Activated CD8-positive, alpha-beta T cell treated with anti-CD3 and anti-CD28 coated beads, Interleukin-2, amount 10 ng/mL, durations not matched to agents 7 days and 5 days (primary cell): ENCODE measurements at regions of chr14 and their contacts with region 1.

Region 1: GRCh38 chr14:87944987-87945604 is 47.9 kb downstream of the GALC start:
- DNase-seq: peak; percentile 26
- ATAC-seq: no peak
- H3K4me3 Mint-ChIP-seq: no peak overlapping the region
- H3K27ac Mint-ChIP-seq: no peak overlapping the region
- H3K4me1 Mint-ChIP-seq: peaks cover 9% of the 10 kb centered on the region
- H3K27me3 Mint-ChIP-seq: no peaks in the 10 kb centered on the region

Region 2: DNA sequence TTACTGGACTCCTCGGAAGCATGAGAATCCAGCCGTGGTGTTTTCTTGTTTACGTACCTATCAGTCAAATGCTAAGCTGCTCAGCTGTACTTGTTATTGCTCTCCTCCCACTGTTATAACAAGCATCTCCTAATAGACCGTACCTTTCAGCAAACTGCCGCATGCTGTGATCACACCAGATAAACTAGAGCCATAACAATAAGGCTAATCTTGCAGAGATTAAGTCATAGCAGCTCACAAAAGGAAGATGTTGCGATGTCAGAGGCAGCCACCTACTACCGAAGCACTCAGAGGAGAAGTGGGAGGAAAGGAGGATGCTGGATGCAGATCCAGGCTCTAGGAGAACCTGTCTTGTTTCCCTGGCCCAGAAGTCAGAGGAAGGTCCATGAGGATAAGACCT is 148.1 kb before region 1 on chr14:
- CTCF ChIA-PET with region 1: no interaction called
- POLR2A ChIA-PET with region 1: no interaction called
- DNase-seq: no peak
- ATAC-seq: no peak
- H3K4me3 Mint-ChIP-seq: no peak overlapping the region
- H3K27ac Mint-ChIP-seq: no peak overlapping the region
- H3K4me1 Mint-ChIP-seq: no peaks in the 10 kb centered on the region
- H3K27me3 Mint-ChIP-seq: no peaks in the 10 kb centered on the region

Region 3: DNA sequence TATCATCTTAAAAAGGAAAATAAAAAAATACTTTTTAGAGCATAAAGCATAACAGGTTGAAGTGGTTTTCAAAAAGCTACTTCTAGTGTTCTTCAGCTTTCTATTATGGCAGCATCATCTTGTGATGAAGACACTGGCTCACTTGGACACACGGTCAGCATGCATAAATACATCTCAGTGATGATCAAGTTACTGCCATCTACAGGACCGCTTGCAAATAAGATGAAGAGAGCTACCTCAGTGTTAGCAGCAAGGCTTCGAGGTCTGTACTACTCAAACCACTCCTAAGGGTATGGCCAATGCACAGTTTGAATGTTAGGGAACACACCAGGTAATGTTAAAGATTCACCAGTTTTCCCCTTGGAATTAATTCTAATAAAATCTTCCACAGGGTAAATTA is 10.9 kb before region 1 on chr14:
- CTCF ChIA-PET with region 1: interaction called, 19 read pairs
- POLR2A ChIA-PET with region 1: no interaction called
- DNase-seq: no peak
- ATAC-seq: no peak
- H3K4me3 Mint-ChIP-seq: no peak overlapping the region
- H3K27ac Mint-ChIP-seq: no peak overlapping the region
- H3K4me1 Mint-ChIP-seq: peaks cover 6% of the 10 kb centered on the region
- H3K27me3 Mint-ChIP-seq: no peaks in the 10 kb centered on the region

Region 4: DNA sequence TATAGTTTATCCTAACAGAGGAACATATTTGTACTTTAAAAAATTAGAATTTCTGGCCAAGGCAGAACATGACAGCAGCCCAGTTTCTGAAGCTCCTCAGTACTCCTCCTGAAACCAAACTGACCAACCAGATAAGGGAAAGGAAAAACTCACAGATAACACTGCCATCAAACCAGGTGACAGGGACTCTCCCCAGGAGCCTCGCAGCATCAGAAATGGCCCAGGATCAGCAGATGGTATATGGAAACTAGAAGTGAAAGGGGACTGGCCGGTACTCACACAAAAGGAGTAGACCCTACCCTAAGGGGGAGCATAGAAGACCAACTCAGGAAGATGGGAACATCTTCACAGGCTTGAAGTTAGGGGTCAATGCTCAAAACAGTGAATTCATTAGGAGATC is 25.9 kb after region 1 on chr14:
- CTCF ChIA-PET with region 1: no interaction called
- POLR2A ChIA-PET with region 1: no interaction called
- DNase-seq: no peak
- ATAC-seq: no peak
- H3K4me3 Mint-ChIP-seq: no peak overlapping the region
- H3K27ac Mint-ChIP-seq: no peak overlapping the region
- H3K4me1 Mint-ChIP-seq: peaks cover 5% of the 10 kb centered on the region
- H3K27me3 Mint-ChIP-seq: no peaks in the 10 kb centered on the region

Region 5: GRCh38 chr14:87992718-87993628 is 47.9 kb after region 1 on chr14 and contains the start of gene GALC:
- CTCF ChIA-PET with region 1: interaction called, 43 read pairs
- POLR2A ChIA-PET with region 1: interaction called, 6 read pairs
- DNase-seq: peak; percentile 98
- ATAC-seq: peak; percentile 93
- H3K4me3 Mint-ChIP-seq: peak within 1 kb of the TSS; percentile 91
- H3K27ac Mint-ChIP-seq: peak within 1 kb of the TSS; percentile 93
- H3K4me1 Mint-ChIP-seq: peaks cover 61% of the 10 kb centered on the region
- H3K27me3 Mint-ChIP-seq: no peaks in the 10 kb centered on the region
- total RNA-seq, gene GALC: 15.6 to 17.0 TPM

Region 6: DNA sequence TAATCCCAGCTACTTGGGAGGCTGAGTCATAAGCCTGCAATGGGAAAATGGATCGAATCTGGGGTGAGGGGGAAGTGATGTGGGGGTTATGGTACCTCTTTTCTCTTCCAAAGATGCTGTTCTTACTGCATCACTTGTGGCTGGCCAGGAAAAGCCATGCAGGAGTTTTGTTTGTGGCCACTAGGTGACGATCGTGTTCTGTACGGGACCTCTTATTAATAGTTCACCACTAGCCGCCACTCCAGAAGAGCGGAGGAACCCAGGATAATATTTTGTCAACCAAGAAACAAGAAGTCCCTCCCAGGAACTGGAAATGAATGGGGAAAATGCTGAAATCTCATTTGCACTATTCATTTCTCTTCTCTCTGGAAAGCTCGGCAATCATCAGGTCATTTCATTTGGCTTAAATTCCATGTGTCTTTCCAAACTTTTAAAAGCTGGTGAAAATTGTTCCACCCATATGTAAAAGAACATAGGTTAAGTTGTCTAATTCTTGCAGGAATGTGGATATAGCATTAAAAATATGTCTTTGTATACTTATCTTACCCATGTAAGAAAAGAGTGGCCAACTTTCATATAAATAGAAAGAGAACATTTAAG is 68.8 kb after region 1 on chr14:
- CTCF ChIA-PET with region 1: interaction called, 31 read pairs
- POLR2A ChIA-PET with region 1: no interaction called
- DNase-seq: peak; percentile 46
- ATAC-seq: no peak
- H3K4me3 Mint-ChIP-seq: no peak overlapping the region
- H3K27ac Mint-ChIP-seq: peak overlapping the region; percentile 4
- H3K4me1 Mint-ChIP-seq: peaks cover 63% of the 10 kb centered on the region
- H3K27me3 Mint-ChIP-seq: no peaks in the 10 kb centered on the region

Region 7: DNA sequence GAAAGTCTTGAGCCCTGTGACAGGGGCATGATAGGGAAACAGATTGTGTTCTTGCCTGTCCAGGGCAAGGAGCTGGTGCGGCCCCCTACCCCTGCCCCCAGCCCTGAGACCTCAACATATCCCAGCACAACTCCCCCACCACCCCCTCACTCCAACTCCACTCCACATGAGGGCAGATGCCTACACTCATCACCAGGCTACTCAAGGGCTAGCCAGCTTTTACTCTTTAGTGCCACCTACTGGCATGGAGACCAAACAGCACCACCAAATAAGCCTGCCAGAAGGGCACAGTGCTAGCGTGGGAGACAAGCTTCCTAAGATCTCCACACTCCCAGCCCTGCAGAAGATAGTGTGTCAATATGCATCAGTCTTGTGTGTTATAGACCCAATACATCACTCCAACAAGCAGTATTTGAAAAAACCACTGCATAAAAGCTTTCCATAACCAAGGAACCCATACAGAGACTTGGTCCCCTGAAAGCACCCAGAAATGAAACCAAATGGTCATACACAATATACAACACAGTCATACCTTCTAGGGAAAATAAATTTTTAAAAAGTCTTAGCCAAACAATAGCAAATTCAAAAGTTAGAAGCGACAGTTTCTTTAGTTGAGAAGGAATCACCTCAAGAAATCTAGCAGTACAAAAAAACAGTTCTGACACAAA is 223.5 kb after region 1 on chr14:
- CTCF ChIA-PET with region 1: interaction called, 71 read pairs
- POLR2A ChIA-PET with region 1: interaction called, 3 read pairs
- DNase-seq: peak; percentile 69
- ATAC-seq: peak; percentile 92
- H3K4me3 Mint-ChIP-seq: peak overlapping the region; percentile 13
- H3K27ac Mint-ChIP-seq: no peak overlapping the region
- H3K4me1 Mint-ChIP-seq: peaks cover 36% of the 10 kb centered on the region
- H3K27me3 Mint-ChIP-seq: peaks cover 34% of the 10 kb centered on the region

Region 8: GRCh38 chr14:88233915-88234314 is 288.8 kb after region 1 on chr14:
- CTCF ChIA-PET with region 1: interaction called, 18 read pairs
- POLR2A ChIA-PET with region 1: no interaction called
- DNase-seq: peak; percentile 24
- ATAC-seq: no peak
- H3K4me3 Mint-ChIP-seq: no peak overlapping the region
- H3K27ac Mint-ChIP-seq: no peak overlapping the region
- H3K4me1 Mint-ChIP-seq: no peaks in the 10 kb centered on the region
- H3K27me3 Mint-ChIP-seq: peaks cover 18% of the 10 kb centered on the region

Region 9: DNA sequence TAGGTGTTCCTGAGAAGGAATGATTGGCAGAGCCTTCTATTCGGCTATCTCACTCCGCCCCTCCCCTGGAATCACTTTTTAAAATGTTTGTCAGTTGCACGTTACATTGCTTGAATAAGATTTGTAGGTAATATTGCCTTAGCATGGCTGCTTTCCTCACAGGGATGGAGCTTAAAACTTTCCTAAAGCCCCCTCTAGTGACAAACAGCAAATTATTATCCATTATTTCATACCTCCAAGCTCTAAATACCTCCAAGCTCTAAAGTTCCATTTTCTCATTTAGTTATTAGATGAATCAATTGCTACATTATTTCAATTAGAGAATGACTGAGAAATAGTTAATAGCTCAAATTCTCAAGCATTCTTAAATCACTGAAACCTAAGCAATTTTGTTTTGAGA is 435.3 kb after region 1 on chr14:
- CTCF ChIA-PET with region 1: interaction called, 14 read pairs
- POLR2A ChIA-PET with region 1: no interaction called
- DNase-seq: no peak
- ATAC-seq: no peak
- H3K4me3 Mint-ChIP-seq: no peak overlapping the region
- H3K27ac Mint-ChIP-seq: no peak overlapping the region
- H3K4me1 Mint-ChIP-seq: peaks cover 14% of the 10 kb centered on the region
- H3K27me3 Mint-ChIP-seq: peaks cover 17% of the 10 kb centered on the region